Activated CD4-positive, alpha-beta T cell treated with anti-CD3 and anti-CD28 coated beads for 36 hours (primary cell): ENCODE measurements at regions of chr20 and their contacts with region 1.

Region 1: DNA sequence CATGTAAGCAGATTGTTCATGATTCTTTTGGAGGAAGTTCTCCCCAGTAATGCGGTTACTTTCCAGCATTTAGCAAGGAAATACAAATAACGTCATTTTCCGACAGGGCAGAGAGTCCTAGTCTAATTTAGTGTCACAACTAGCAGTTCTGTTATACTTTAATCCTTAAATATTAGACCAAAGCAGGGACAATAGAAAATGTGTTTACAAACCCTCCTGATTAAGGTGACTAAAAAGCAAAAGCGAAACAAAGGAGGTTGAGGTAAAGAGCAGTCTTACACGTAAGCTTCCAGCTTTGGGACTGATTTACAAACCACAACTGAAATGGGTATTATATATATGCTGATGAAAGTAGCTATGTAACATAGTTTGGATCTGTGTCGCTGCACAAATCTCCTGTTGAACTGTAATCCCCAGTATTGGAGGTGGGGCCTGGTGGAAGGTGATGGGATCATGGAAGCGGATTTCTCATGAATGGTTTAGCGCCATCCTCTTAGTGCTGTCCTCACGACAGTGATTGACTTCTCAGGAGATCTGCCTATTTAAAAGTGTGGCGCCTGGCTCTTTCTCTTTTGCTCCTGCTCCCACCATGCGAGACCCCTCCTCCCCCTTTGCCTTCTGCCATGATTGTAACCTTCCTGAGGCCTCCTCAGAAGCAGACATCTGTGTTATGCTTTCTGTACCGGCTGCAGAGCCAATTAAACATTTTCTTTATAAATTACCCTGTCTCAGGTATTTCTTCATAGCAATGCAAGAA is 81.9 kb downstream of the PLCB1 start:
- DNase-seq: peak; percentile 13
- ATAC-seq: peak; percentile 81
- H3K4me3 Mint-ChIP-seq: peak overlapping the region; percentile 53
- H3K27ac Mint-ChIP-seq: peak overlapping the region; percentile 80
- H3K4me1 Mint-ChIP-seq: peaks cover 55% of the 10 kb centered on the region
- H3K27me3 Mint-ChIP-seq: no peaks in the 10 kb centered on the region

Region 2: GRCh38 chr20:8019246-8019997 is 194.6 kb before region 1 on chr20 and contains the start of gene TMX4:
- CTCF ChIA-PET with region 1: no interaction called
- POLR2A ChIA-PET with region 1: no interaction called
- intact Hi-C with region 1: loop called in 1 of 2 experiments (anchors 5 kb)
- DNase-seq: peak; percentile 94
- ATAC-seq: peak; percentile 84
- H3K4me3 Mint-ChIP-seq: peak within 1 kb of the TSS; percentile 85
- H3K27ac Mint-ChIP-seq: peak within 1 kb of the TSS; percentile 75
- H3K4me1 Mint-ChIP-seq: peaks cover 24% of the 10 kb centered on the region
- H3K27me3 Mint-ChIP-seq: no peaks in the 10 kb centered on the region
- total RNA-seq, gene TMX4: 19.2 to 25.9 TPM

Region 3: GRCh38 chr20:8094415-8094818 is 119.6 kb before region 1 on chr20:
- CTCF ChIA-PET with region 1: no interaction called
- POLR2A ChIA-PET with region 1: no interaction called
- intact Hi-C with region 1: no loop called
- DNase-seq: no peak
- ATAC-seq: no peak
- H3K4me3 Mint-ChIP-seq: no peak overlapping the region
- H3K27ac Mint-ChIP-seq: no peak overlapping the region
- H3K4me1 Mint-ChIP-seq: no peaks in the 10 kb centered on the region
- H3K27me3 Mint-ChIP-seq: peaks cover 8% of the 10 kb centered on the region

Region 4: GRCh38 chr20:8151372-8151771 is 62.6 kb before region 1 on chr20:
- CTCF ChIA-PET with region 1: interaction called, 3 read pairs
- POLR2A ChIA-PET with region 1: no interaction called
- intact Hi-C with region 1: loop called (anchors 2 to 5 kb)
- DNase-seq: no peak
- ATAC-seq: no peak
- H3K4me3 Mint-ChIP-seq: no peak overlapping the region
- H3K27ac Mint-ChIP-seq: no peak overlapping the region
- H3K4me1 Mint-ChIP-seq: peaks cover 42% of the 10 kb centered on the region
- H3K27me3 Mint-ChIP-seq: no peaks in the 10 kb centered on the region

Region 5: DNA sequence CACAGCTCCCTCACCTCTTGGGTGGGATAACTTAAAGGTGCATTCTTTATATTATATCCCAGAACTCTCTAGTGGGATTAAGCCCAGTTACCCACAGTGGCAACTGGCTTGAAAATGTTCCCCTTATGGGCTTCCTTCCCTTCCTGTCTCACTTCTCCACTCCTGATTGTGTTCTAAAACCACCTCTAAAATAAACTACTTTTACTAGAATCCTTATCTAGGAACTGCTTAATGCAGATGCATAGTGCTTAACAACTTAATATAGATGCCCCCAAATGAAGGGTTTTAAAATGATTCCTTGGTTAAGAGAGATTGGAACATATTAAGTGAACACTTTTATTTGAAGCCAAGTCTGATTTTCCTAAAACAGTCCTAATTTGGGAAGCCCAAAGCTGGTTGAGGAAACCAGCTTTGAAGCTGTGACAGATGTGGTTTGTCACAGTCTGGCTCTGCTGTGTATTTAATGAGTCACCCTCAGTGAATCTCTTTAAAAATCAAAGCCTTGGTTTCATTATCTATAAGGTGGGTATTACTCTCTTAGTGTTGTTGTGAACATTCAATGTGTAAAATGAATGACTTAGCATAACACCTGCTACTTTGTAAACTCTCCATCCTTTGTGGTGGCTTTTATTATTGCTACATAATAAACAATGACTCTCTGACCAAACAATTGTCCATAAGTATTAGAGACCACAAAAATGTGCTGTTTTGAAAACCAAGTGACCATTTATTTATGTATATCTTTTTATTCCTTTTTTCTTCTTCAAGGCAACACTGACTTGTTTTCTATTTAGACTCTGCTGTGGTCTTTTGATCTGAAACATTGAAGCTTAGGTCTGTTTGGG is 57.6 kb before region 1 on chr20:
- CTCF ChIA-PET with region 1: interaction called, 3 read pairs
- POLR2A ChIA-PET with region 1: no interaction called
- intact Hi-C with region 1: loop called (anchors 2 to 5 kb)
- DNase-seq: no peak
- ATAC-seq: peak; percentile 85
- H3K4me3 Mint-ChIP-seq: no peak overlapping the region
- H3K27ac Mint-ChIP-seq: no peak overlapping the region
- H3K4me1 Mint-ChIP-seq: peaks cover 48% of the 10 kb centered on the region
- H3K27me3 Mint-ChIP-seq: no peaks in the 10 kb centered on the region

Region 6: GRCh38 chr20:8271727-8272126 is 57.7 kb after region 1 on chr20:
- CTCF ChIA-PET with region 1: interaction called, 3 read pairs
- POLR2A ChIA-PET with region 1: interaction called, 3 read pairs
- intact Hi-C with region 1: loop called (anchors 5 kb)
- DNase-seq: no peak
- ATAC-seq: peak; percentile 26
- H3K4me3 Mint-ChIP-seq: no peak overlapping the region
- H3K27ac Mint-ChIP-seq: no peak overlapping the region
- H3K4me1 Mint-ChIP-seq: peaks cover 23% of the 10 kb centered on the region
- H3K27me3 Mint-ChIP-seq: peaks cover 8% of the 10 kb centered on the region

Region 7: GRCh38 chr20:8399947-8400346 is 185.9 kb after region 1 on chr20:
- CTCF ChIA-PET with region 1: no interaction called
- POLR2A ChIA-PET with region 1: no interaction called
- intact Hi-C with region 1: loop called in 1 of 2 experiments (anchors 5 kb)
- DNase-seq: no peak
- ATAC-seq: peak; percentile 58
- H3K4me3 Mint-ChIP-seq: no peak overlapping the region
- H3K27ac Mint-ChIP-seq: no peak overlapping the region
- H3K4me1 Mint-ChIP-seq: peaks cover 6% of the 10 kb centered on the region
- H3K27me3 Mint-ChIP-seq: no peaks in the 10 kb centered on the region